ENCODE measurements at regions of chr1 and their contacts with region 1.

Region 1: GRCh38 chr1:229227298-229227919 is 43.5 kb upstream of the RAB4A start:
- DNase-seq: peak; percentile 89
- ATAC-seq: peak; percentile 82
- H3K4me3 Mint-ChIP-seq: no peak overlapping the region
- H3K27ac Mint-ChIP-seq: no peak overlapping the region
- H3K4me1 Mint-ChIP-seq: peaks cover 21% of the 10 kb centered on the region
- H3K27me3 Mint-ChIP-seq: no peaks in the 10 kb centered on the region

Region 2: GRCh38 chr1:228664399-228664914 is 563.0 kb before region 1 on chr1:
- CTCF ChIA-PET with region 1: interaction called, 46 read pairs
- POLR2A ChIA-PET with region 1: no interaction called
- intact Hi-C with region 1: loop called (anchors 1 kb)
- DNase-seq: peak; percentile 87
- ATAC-seq: peak; percentile 53
- H3K4me3 Mint-ChIP-seq: no peak overlapping the region
- H3K27ac Mint-ChIP-seq: no peak overlapping the region
- H3K4me1 Mint-ChIP-seq: no peaks in the 10 kb centered on the region
- H3K27me3 Mint-ChIP-seq: peaks cover 2% of the 10 kb centered on the region

Region 3: GRCh38 chr1:228734881-228735801 is 492.3 kb before region 1 on chr1 and contains the start of gene RHOU:
- CTCF ChIA-PET with region 1: interaction called, 24 read pairs
- POLR2A ChIA-PET with region 1: no interaction called
- intact Hi-C with region 1: loop called (anchors 1 kb)
- DNase-seq: peak; percentile 82
- ATAC-seq: peak; percentile 88
- H3K4me3 Mint-ChIP-seq: peak within 1 kb of the TSS; percentile 70
- H3K27ac Mint-ChIP-seq: no peak within 1 kb of the TSS
- H3K4me1 Mint-ChIP-seq: peaks cover 8% of the 10 kb centered on the region
- H3K27me3 Mint-ChIP-seq: peaks cover 10% of the 10 kb centered on the region
- total RNA-seq, gene RHOU: 1.2 TPM

Region 4: GRCh38 chr1:229070168-229070567 is 157.2 kb before region 1 on chr1:
- CTCF ChIA-PET with region 1: no interaction called
- POLR2A ChIA-PET with region 1: no interaction called
- intact Hi-C with region 1: no loop called
- DNase-seq: no peak
- ATAC-seq: no peak
- H3K4me3 Mint-ChIP-seq: no peak overlapping the region
- H3K27ac Mint-ChIP-seq: no peak overlapping the region
- H3K4me1 Mint-ChIP-seq: peaks cover 11% of the 10 kb centered on the region
- H3K27me3 Mint-ChIP-seq: no peaks in the 10 kb centered on the region

Region 5: GRCh38 chr1:229139331-229140118 is 87.9 kb before region 1 on chr1:
- CTCF ChIA-PET with region 1: interaction called, 4 read pairs
- POLR2A ChIA-PET with region 1: no interaction called
- intact Hi-C with region 1: loop called (anchors 5 to 10 kb)
- DNase-seq: peak; percentile 49
- ATAC-seq: peak; percentile 87
- H3K4me3 Mint-ChIP-seq: peak overlapping the region; percentile 0
- H3K27ac Mint-ChIP-seq: no peak overlapping the region
- H3K4me1 Mint-ChIP-seq: peaks cover 39% of the 10 kb centered on the region
- H3K27me3 Mint-ChIP-seq: no peaks in the 10 kb centered on the region

Region 6: GRCh38 chr1:229244091-229244490 is 16.7 kb after region 1 on chr1:
- CTCF ChIA-PET with region 1: interaction called, 11 read pairs
- POLR2A ChIA-PET with region 1: no interaction called
- intact Hi-C with region 1: no loop called
- DNase-seq: no peak
- ATAC-seq: no peak
- H3K4me3 Mint-ChIP-seq: no peak overlapping the region
- H3K27ac Mint-ChIP-seq: no peak overlapping the region
- H3K4me1 Mint-ChIP-seq: peaks cover 9% of the 10 kb centered on the region
- H3K27me3 Mint-ChIP-seq: no peaks in the 10 kb centered on the region